ENCODE measurements at regions of chr18 and their contacts with region 1.

Region 1: GRCh38 chr18:23077493-23078256 is 57.6 kb upstream of the CABLES1 start:
- DNase-seq: peak; percentile 61
- H3K4me3 Mint-ChIP-seq: no peak overlapping the region
- H3K27ac Mint-ChIP-seq: no peak overlapping the region
- H3K4me1 Mint-ChIP-seq: peaks cover 16% of the 10 kb centered on the region
- H3K27me3 Mint-ChIP-seq: no peaks in the 10 kb centered on the region
- CTCF ChIP-seq: peak; percentile 58

Region 2: DNA sequence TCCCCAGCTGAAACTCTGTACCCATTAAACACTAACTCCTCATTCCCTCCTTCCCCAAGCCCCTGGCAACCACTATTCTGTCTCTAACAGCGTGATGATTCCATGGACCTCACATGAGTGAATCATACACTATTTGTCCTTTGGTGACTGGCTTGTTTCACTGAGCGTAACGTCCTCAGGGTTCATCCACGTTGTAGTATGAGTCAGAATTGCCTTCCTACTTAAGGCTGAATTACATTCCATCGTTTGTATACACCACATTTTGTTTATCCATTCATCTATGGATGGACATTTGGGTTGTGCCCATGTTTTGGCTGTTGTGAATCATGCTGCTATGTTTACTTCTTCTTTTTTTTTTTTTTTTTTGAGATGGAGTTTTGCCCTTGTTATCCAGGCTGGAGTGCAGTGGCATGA is 38.0 kb after region 1 on chr18:
- CTCF ChIA-PET with region 1: no interaction called
- intact Hi-C with region 1: loop called (anchors 1 kb)
- DNase-seq: peak; percentile 29
- H3K4me3 Mint-ChIP-seq: peak overlapping the region; percentile 13
- H3K27ac Mint-ChIP-seq: peak overlapping the region; percentile 58
- H3K4me1 Mint-ChIP-seq: peaks cover 47% of the 10 kb centered on the region
- H3K27me3 Mint-ChIP-seq: no peaks in the 10 kb centered on the region
- CTCF ChIP-seq: no peak

Measured in Calu3 (cell line).